ENCODE measurements at regions of chr12 and their contacts with region 1.

Region 1: GRCh38 chr12:92136965-92137721 is 8.5 kb downstream of the BTG1 start:
- DNase-seq: no peak
- ATAC-seq: peak; percentile 61; the same call in 1 of the 2 replicates
- H3K4me3 ChIP-seq: peak overlapping the region; percentile 26 to 78; a peak in 3 of 4 replicates
- H3K27ac ChIP-seq: peak overlapping the region; percentile 97
- H3K4me1 ChIP-seq: peaks cover 91% of the 10 kb centered on the region
- H3K27me3 ChIP-seq: no peaks in the 10 kb centered on the region
- CTCF ChIP-seq: no peak

Region 2: GRCh38 chr12:91577586-91578539 is 559.3 kb before region 1 on chr12:
- CTCF ChIA-PET with region 1: no interaction called
- POLR2A ChIA-PET with region 1: no interaction called
- in situ Hi-C with region 1: no loop called
- intact Hi-C with region 1: loop called (anchors 10 kb)
- DNase-seq: no peak
- ATAC-seq: no peak
- H3K4me3 ChIP-seq: peak overlapping the region; percentile 7 to 22; a peak in 3 of 4 replicates
- H3K27ac ChIP-seq: 0 out of 2 replicates have a peak overlapping the region, but pooled peaks have one; percentile 4
- H3K4me1 ChIP-seq: no peaks in the 10 kb centered on the region
- H3K27me3 ChIP-seq: no peaks in the 10 kb centered on the region
- CTCF ChIP-seq: peak; percentile 71; the same call in 1 of the 2 replicates

Region 3: DNA sequence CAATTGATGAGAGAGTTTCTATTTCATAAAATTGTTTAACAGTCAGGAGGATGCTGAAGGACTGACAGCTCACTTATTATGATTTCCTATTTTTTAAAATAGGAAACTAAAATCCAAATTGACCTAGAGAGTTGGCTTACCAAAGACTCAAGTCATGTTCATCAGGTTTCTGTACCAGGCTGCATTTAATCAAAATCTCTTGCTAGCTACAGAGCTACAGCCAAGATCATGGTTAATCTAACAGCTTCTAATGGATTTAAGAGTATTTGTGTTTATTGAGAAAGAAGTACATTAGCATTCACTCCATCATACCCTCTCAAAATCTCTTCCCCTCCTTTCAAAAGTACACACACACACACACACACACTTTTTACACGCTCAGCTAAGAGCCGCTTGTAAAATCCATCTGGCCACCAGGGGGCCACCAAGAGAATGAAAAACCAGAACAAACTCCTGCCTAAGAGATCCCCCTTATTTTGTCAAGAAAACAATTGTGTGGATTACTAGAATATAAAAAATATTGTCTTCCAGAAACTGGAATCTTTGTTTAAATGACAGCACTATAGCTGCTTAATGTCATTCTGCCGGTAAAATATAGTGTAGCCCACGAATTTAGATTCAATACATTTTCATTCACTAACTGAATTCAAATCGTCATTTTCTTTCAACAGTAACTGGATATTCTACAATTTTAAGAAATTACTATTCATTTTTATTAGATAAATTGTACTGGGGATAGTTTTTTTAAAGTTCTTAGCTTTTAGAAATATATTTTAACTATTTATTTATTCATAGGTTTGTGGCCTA is 325.5 kb before region 1 on chr12:
- CTCF ChIA-PET with region 1: no interaction called
- POLR2A ChIA-PET with region 1: no interaction called
- in situ Hi-C with region 1: no loop called
- intact Hi-C with region 1: loop called (anchors 2 kb)
- DNase-seq: peak; percentile 33
- ATAC-seq: no peak
- H3K4me3 ChIP-seq: no peak overlapping the region
- H3K27ac ChIP-seq: no peak overlapping the region
- H3K4me1 ChIP-seq: no peaks in the 10 kb centered on the region
- H3K27me3 ChIP-seq: no peaks in the 10 kb centered on the region
- CTCF ChIP-seq: peak; percentile 84

Region 4: GRCh38 chr12:91965781-91966180 is 171.4 kb before region 1 on chr12:
- CTCF ChIA-PET with region 1: no interaction called
- POLR2A ChIA-PET with region 1: no interaction called
- in situ Hi-C with region 1: no loop called
- intact Hi-C with region 1: no loop called
- DNase-seq: no peak
- ATAC-seq: no peak
- H3K4me3 ChIP-seq: no peak overlapping the region
- H3K27ac ChIP-seq: no peak overlapping the region
- H3K4me1 ChIP-seq: no peaks in the 10 kb centered on the region
- H3K27me3 ChIP-seq: no peaks in the 10 kb centered on the region
- CTCF ChIP-seq: no peak

Region 5: DNA sequence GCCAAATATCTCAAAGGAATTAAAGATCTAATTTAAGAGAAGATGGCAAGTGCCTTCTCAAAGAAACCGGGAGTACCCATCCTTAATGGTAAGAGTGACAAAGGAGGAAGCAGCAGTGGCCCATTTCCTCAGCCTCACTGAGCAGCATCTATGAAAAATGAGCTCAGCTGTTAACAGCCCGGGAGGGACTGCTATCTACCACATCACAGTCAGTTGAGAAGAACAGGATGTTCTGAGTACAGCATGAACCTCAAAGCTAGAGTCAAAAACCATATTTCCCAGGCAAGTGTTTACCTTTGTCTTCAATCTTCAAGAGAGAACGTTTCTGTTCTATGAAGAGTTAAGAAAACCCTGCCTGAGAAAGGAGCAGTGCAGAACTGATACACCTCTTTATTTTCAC is 106.5 kb before region 1 on chr12:
- CTCF ChIA-PET with region 1: no interaction called
- POLR2A ChIA-PET with region 1: no interaction called
- in situ Hi-C with region 1: no loop called
- intact Hi-C with region 1: no loop called
- DNase-seq: no peak
- ATAC-seq: no peak
- H3K4me3 ChIP-seq: no peak overlapping the region
- H3K27ac ChIP-seq: no peak overlapping the region
- H3K4me1 ChIP-seq: peaks cover 6% of the 10 kb centered on the region; the same call in 1 of the 2 replicates
- H3K27me3 ChIP-seq: no peaks in the 10 kb centered on the region
- CTCF ChIP-seq: no peak

Measured in Panc1 (cell line).